ENCODE measurements at regions of chr2 and their contacts with region 1.

Region 1: DNA sequence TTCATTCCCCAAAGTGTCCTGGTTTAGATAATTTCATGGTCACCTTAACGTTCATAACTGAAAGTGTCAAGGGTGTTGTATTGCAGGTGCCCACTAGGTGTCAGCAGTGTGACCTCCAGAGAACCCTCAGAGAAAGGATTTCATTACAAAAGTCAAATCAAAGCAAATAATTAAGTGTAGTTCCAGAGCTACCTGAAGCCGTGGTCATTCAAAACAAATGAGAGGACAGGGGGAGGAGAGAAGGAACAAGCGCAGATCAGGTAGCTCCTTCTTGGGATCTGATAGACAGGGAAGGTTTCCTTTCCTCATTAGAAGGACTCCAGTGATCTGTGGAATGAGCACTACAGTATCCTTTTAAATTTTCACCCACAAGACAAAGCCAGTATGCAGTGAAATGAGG is at the start of gene SLC9A4:
- DNase-seq: peak; percentile 62
- ATAC-seq: peak; percentile 85
- H3K4me3 Mint-ChIP-seq: no peak within 1 kb of the TSS
- H3K27ac Mint-ChIP-seq: no peak within 1 kb of the TSS
- H3K4me1 Mint-ChIP-seq: peaks cover 8% of the 10 kb centered on the region
- H3K27me3 Mint-ChIP-seq: no peaks in the 10 kb centered on the region; the same call in 1 of the 2 replicates
- CTCF ChIP-seq: peak; percentile 75
- total RNA-seq, gene SLC9A4: 0.09 to 0.11 TPM in 2 of 3 replicates, not detected in the other

Region 2: GRCh38 chr2:102291318-102292251 is 181.4 kb before region 1 on chr2:
- CTCF ChIA-PET with region 1: no interaction called
- POLR2A ChIA-PET with region 1: no interaction called
- DNase-seq: no peak
- ATAC-seq: no peak
- H3K4me3 Mint-ChIP-seq: no peak overlapping the region
- H3K27ac Mint-ChIP-seq: no peak overlapping the region
- H3K4me1 Mint-ChIP-seq: no peaks in the 10 kb centered on the region
- H3K27me3 Mint-ChIP-seq: no peaks in the 10 kb centered on the region
- CTCF ChIP-seq: no peak

Region 3: DNA sequence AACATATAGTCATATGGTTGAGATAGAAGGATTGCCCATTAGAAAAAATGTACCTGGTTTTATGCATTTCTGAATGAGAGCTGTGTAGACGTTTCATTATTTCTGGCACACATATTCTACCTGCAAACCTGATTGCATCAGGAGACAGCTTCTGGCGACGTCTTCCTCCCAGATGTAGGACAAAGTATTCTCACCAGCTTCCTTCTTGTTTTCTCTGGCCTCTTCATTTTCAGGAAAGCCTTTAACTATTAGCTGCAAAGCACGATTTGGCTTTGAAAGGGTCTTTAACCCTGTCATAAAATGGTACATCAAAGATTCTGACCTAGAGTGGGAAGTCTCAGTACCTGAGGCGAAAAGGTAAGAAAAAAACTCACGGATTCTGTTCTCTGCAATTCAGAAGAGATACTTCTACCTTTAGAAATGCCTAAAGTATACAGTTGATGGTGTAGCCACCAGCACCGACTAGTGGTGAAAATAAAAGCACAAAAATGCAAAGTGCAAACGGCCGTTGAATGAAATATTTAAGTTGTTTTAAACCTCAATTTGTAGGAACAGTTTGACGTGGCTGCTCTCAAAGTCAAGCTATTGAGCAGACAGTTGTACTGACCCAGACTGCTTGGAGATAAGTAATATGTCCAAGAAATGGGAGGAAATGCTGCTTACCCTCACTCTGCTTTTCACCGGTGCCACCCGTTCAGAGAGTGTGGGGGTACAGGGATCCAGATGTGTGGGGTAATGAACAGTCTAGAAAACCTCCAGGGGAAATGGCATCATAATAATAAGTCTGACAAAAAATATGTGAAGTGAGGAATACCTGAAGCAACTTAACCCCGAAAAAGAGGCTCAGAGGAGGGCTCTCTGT is 29.8 kb before region 1 on chr2:
- CTCF ChIA-PET with region 1: no interaction called
- POLR2A ChIA-PET with region 1: no interaction called
- DNase-seq: peak; percentile 15
- ATAC-seq: peak; percentile 72
- H3K4me3 Mint-ChIP-seq: no peak overlapping the region
- H3K27ac Mint-ChIP-seq: no peak overlapping the region
- H3K4me1 Mint-ChIP-seq: no peaks in the 10 kb centered on the region
- H3K27me3 Mint-ChIP-seq: no peaks in the 10 kb centered on the region
- CTCF ChIP-seq: 0 out of 2 replicates have a peak, but pooled peaks have one; percentile 22

Region 4: GRCh38 chr2:102484310-102485061 is 11.5 kb after region 1 on chr2:
- CTCF ChIA-PET with region 1: interaction called, 11 read pairs
- POLR2A ChIA-PET with region 1: no interaction called
- DNase-seq: no peak
- ATAC-seq: peak; percentile 50
- H3K4me3 Mint-ChIP-seq: no peak overlapping the region
- H3K27ac Mint-ChIP-seq: no peak overlapping the region
- H3K4me1 Mint-ChIP-seq: peaks cover 28% of the 10 kb centered on the region
- H3K27me3 Mint-ChIP-seq: no peaks in the 10 kb centered on the region
- CTCF ChIP-seq: no peak

Region 5: DNA sequence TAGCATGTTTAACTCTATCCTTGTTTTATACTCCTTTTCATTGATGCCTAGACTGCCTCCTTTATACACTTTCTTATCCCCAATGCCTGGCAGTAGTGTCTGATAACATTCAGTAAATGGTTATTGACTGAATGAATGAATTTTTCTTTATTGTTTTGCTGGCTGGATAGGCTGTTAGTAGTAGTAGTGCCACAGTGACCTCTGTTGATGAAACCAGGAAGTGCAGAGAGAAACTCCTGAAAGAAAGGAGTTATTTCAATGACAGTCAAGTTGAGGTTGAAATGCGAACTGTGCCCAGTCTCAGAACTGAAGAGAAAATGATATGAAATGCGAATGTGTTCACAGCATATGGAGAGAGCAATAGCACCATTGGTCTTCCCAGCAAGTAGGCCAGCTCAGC is 119.6 kb after region 1 on chr2:
- CTCF ChIA-PET with region 1: interaction called, 11 read pairs
- POLR2A ChIA-PET with region 1: no interaction called
- DNase-seq: peak; percentile 23
- ATAC-seq: 0 out of 2 replicates have a peak, but pooled peaks have one; percentile 32
- H3K4me3 Mint-ChIP-seq: no peak overlapping the region
- H3K27ac Mint-ChIP-seq: no peak overlapping the region
- H3K4me1 Mint-ChIP-seq: 0 out of 2 replicates have a peak, but pooled peaks cover 3% of the 10 kb centered on the region
- H3K27me3 Mint-ChIP-seq: no peaks in the 10 kb centered on the region
- CTCF ChIP-seq: peak; percentile 48; the same call in 1 of the 2 replicates

Region 6: GRCh38 chr2:102983786-102984185 is 510.8 kb after region 1 on chr2:
- CTCF ChIA-PET with region 1: no interaction called
- POLR2A ChIA-PET with region 1: no interaction called
- DNase-seq: no peak
- ATAC-seq: no peak
- H3K4me3 Mint-ChIP-seq: no peak overlapping the region
- H3K27ac Mint-ChIP-seq: no peak overlapping the region
- H3K4me1 Mint-ChIP-seq: peaks cover 4% of the 10 kb centered on the region
- H3K27me3 Mint-ChIP-seq: no peaks in the 10 kb centered on the region
- CTCF ChIP-seq: no peak